Right cardiac atrium (tissue), 5 donors: ENCODE measurements at regions of chr3 and their contacts with region 1.

Region 1: GRCh38 chr3:11643605-11644087 is at the start of gene VGLL4:
- DNase-seq: peak; percentile 94 to 97 (median 97)
- ATAC-seq: peak; percentile 93 to 95
- H3K4me3 ChIP-seq: peak within 1 kb of the TSS; percentile 88
- H3K27ac ChIP-seq: peak within 1 kb of the TSS; percentile 93
- H3K4me1 ChIP-seq: peaks cover 11% of the 10 kb centered on the region
- H3K27me3 ChIP-seq: no peaks in the 10 kb centered on the region
- total RNA-seq, gene VGLL4: 51.8 to 66.9 (median 59.1) TPM

Region 2: DNA sequence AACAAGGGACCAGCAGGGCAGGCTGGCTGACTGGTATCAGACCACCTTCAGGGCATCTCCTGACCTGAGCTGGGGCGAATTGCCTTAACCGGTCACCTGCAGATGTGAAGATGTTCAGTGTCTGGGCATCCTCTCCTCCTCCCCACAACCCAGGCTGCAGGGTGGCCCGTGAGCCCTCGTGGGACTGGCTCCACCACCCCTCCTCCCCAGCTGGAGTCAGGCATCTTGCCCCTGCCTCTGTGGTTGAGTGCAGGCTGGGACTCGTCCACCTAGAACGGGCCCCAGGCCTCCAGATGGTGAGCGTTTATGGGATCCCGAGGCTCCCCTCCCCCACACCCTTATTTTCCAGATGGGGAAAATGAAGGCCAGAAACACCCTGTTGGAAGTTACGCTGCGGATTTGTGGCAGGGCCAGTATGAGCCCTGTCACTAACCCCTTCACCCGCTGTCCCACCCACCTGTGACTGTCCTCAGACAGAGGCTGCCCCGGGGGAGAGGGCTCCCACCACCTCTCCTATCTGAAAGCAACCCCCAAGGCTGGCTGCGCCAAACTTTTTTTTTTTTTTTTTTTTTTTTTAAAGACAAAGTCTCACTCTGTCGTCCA is 82.2 kb before region 1 on chr3:
- intact Hi-C with region 1: loop called in 2 of 4 experiments (anchors 5 kb)
- DNase-seq: peak in 1 of 3 donors; percentile 70
- ATAC-seq: no peak
- H3K4me3 ChIP-seq: no peak overlapping the region
- H3K27ac ChIP-seq: no peak overlapping the region
- H3K4me1 ChIP-seq: peaks cover 35% of the 10 kb centered on the region
- H3K27me3 ChIP-seq: no peaks in the 10 kb centered on the region

Region 3: GRCh38 chr3:11570789-11571495 is 72.7 kb before region 1 on chr3:
- intact Hi-C with region 1: loop called in 1 of 4 experiments (anchors 10 kb)
- DNase-seq: peak in 2 of 3 donors; percentile 46 to 61
- ATAC-seq: peak in 1 of 2 donors; percentile 56
- H3K4me3 ChIP-seq: no peak overlapping the region
- H3K27ac ChIP-seq: peak overlapping the region; percentile 50
- H3K4me1 ChIP-seq: peaks cover 29% of the 10 kb centered on the region
- H3K27me3 ChIP-seq: no peaks in the 10 kb centered on the region

Region 4: DNA sequence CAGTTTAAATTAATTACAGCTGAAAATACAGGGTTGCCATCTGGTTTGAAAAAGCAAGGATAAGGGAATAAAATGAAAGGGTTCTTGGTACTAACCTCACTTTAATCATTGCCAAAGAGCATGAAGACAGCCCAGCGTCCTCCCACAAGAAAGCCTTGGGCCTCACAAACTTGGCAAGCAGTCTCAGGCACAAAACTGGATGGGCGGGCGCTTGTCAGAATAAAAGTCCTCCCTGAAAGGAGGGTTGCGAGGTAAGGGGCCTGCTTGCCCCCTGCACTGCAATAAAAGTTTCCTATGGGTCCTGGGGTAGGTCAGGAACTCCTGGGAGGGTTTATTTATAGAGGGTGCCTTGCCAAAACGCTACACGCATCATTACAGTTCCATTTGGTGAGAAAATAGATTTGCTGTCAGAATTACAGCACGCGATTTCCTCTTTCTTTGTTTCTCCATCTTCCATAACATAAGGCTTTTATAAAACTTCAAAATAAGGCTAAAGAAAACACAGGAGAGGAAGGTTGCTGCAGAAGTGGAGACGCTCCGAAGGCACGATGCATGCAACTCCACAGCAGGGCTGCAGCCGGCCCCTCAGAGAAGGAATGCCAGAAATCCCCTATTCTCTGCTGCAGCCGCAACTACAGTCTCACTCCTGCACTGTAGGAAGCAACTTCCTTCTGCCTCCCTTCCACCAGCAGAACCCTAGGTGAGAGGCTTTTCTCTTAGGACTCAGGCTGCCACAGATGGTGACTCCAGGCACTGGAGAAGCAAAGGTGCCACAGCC is 61.3 kb before region 1 on chr3:
- intact Hi-C with region 1: loop called in 2 of 4 experiments (anchors 10 kb)
- DNase-seq: peak; percentile 77 to 89 (median 84)
- ATAC-seq: peak; percentile 78 to 87
- H3K4me3 ChIP-seq: peak overlapping the region; percentile 36
- H3K27ac ChIP-seq: peak overlapping the region; percentile 74
- H3K4me1 ChIP-seq: peaks cover 18% of the 10 kb centered on the region
- H3K27me3 ChIP-seq: no peaks in the 10 kb centered on the region

Region 5: DNA sequence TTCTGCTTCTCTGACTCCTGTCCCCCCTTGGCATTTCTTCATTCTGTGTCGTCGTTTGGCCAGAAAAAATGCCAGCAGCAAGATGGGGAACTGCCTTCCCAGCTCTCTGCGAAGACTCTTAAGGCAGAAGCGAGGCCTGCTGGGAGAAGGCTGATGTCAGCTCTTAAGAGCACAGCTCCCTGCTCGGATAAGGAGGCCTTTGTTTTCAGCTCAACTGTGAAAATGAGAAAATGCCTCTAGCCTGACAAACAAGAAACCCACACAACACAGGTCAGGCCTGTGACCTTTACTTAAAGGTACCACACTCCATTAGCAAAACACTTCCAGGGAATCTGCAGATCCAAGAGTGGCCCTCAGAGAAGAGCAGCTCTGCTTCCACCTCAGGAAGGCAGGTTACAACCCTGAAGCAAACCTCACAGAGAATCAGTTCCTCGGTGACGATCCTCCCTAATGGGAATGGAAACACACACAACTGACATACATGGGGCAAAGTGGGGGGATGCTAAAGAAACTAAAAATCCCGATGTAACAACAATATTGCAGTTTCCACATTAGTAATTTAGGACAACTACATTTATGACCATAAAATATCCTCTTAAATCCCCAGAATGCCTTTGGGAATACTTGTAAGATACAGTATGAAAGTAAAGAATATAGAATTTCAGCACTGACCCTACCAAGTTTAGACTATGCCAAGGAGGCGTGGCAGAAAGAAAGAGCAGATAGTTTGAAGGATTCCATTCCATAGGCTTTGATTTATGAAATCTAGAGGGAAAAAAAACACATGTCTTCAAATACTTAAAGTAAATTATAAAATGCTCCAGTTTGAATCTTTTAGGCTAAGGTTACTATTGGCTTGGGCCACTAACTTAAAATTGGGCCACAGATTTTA is 52.0 kb before region 1 on chr3:
- intact Hi-C with region 1: loop called in 2 of 4 experiments (anchors 5 to 10 kb)
- DNase-seq: peak; percentile 79 to 89 (median 84)
- ATAC-seq: peak; percentile 80 to 88
- H3K4me3 ChIP-seq: no peak overlapping the region
- H3K27ac ChIP-seq: peak overlapping the region; percentile 96
- H3K4me1 ChIP-seq: peaks cover 50% of the 10 kb centered on the region
- H3K27me3 ChIP-seq: no peaks in the 10 kb centered on the region

Region 6: DNA sequence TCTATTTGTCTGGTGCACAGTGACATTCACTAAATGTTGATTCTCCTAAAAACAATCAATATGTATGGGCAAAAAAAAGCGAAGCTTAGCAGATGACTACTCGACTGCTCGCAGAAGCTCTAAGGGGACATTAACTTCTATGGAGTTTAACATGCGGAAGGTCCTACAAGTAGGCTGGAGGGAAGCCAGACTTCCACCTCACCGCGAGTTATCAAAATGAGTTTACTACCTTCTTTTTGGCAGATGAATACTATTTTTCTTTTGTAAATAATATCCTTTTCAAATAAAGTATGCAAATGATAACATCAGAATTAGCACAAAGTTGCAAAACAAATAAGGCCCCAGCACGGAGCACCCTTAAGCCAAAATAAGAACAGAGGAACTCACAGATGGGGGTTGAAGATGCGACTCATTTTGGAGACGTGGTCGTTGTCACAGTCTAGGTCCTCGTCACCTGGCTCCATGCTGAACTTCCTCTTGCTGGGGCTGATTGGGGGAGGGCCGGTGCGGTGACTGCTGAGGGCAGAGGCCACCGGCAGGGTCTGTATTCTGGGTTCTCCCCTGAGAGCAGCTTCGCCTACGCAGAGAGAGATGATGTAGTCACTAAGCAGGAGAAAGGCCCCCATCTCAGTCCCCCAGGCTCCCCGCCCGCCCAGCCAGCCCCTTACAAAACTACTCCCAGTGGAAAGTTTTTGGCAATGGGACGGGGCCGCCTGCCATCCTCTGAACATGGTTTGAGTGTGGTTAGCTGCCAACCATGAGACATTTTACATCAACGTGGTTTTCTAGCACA is 42.0 kb before region 1 on chr3:
- intact Hi-C with region 1: loop called in 1 of 4 experiments (anchors 5 kb)
- DNase-seq: peak; percentile 84 to 91 (median 87)
- ATAC-seq: peak; percentile 34 to 54
- H3K4me3 ChIP-seq: no peak overlapping the region
- H3K27ac ChIP-seq: peak overlapping the region; percentile 98
- H3K4me1 ChIP-seq: peaks cover 28% of the 10 kb centered on the region
- H3K27me3 ChIP-seq: no peaks in the 10 kb centered on the region

Region 7: GRCh38 chr3:11719406-11720230 is 76.0 kb after region 1 on chr3:
- intact Hi-C with region 1: no loop called
- DNase-seq: peak; percentile 70 to 90 (median 89)
- ATAC-seq: peak; percentile 73 to 89
- H3K4me3 ChIP-seq: peak overlapping the region; percentile 91
- H3K27ac ChIP-seq: peak overlapping the region; percentile 89
- H3K4me1 ChIP-seq: no peaks in the 10 kb centered on the region
- H3K27me3 ChIP-seq: no peaks in the 10 kb centered on the region

Region 8: GRCh38 chr3:11739706-11740105 is 96.1 kb after region 1 on chr3:
- intact Hi-C with region 1: no loop called
- DNase-seq: peak in 1 of 3 donors; percentile 65
- ATAC-seq: no peak
- H3K4me3 ChIP-seq: no peak overlapping the region
- H3K27ac ChIP-seq: no peak overlapping the region
- H3K4me1 ChIP-seq: no peaks in the 10 kb centered on the region
- H3K27me3 ChIP-seq: no peaks in the 10 kb centered on the region